Ovary (tissue), 10 donors: ENCODE measurements at regions of chr12 and their contacts with region 1.

Region 1: GRCh38 chr12:7092229-7092985 is at the start of gene C1R:
- DNase-seq: peak; percentile 88 to 95 (median 92)
- H3K4me3 ChIP-seq: peak within 1 kb of the TSS; percentile 64
- H3K27ac ChIP-seq: peak within 1 kb of the TSS; percentile 74 to 90
- H3K4me1 ChIP-seq: peaks cover 23% of the 10 kb centered on the region
- H3K27me3 ChIP-seq: no peaks in the 10 kb centered on the region
- CTCF ChIP-seq: peak; percentile 81 to 87 (median 85)
- EP300 ChIP-seq: peak; percentile 37
- POLR2A ChIP-seq: peak; percentile 84
- total RNA-seq, gene C1R: 472 to 1,524 (median 759) TPM

Region 2: DNA sequence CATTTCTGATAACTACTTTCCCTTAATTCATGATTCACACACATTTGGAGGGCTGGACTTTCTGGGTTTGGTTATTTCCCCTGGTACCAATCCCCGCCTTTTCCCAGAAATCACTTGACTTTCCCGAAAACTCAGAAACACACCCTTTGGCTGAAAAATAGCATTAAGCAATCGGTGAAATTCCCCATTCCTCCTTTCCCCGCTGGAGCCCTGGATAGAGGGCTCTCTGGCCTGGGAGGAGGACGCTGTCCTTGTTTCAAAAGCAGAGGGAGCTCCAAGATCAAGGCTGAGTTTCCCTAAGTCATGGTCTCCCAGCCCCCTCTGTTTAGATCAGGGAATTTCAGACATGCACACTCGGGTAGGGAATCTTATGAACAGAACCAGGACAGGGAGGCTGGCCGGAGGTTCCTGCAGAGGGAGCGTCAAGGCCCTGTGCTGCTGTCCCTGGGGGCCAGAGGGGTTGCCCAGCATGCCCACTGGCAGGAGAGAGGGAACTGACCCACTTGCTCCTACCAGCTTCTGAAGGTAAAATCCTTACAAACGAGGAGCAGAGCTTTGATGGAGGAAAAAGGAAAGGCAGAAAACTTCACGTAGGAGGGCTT is 32.0 kb before region 1 on chr12 and contains the start of gene C1S:
- intact Hi-C with region 1: loop called in 2 of 4 experiments (anchors 2 kb)
- DNase-seq: peak; percentile 80 to 92 (median 85)
- H3K4me3 ChIP-seq: peak within 1 kb of the TSS; percentile 48
- H3K27ac ChIP-seq: peak within 1 kb of the TSS; percentile 66 to 89
- H3K4me1 ChIP-seq: peaks cover 8% of the 10 kb centered on the region
- H3K27me3 ChIP-seq: no peaks in the 10 kb centered on the region
- CTCF ChIP-seq: peak; percentile 85 to 99 (median 98)
- EP300 ChIP-seq: peak; percentile 99
- POLR2A ChIP-seq: peak; percentile 90
- total RNA-seq, gene C1S: 499 to 1,495 (median 773) TPM